A673 (cell line): ENCODE measurements at regions of chr21 and their contacts with region 1.

Region 1: DNA sequence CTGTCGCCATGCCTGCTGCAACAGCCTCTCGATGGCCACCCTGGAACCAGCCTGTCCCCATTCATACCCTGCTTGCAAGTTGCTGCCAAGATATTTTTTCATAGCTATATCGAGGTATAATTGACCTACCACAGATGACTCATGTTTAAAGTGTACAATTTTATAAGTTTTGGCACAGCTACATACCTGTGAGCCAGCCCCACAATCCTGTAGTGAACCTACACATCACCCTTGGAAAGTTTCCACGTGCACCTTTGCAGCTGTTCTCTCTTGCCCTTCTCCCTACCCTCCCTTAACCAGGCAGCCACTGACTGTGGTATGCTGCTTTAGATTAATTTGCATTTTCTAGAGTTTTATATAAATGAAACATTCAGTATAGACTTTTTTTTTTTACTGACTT is 23.0 kb upstream of the KCNJ6 start:
- DNase-seq: no peak
- H3K4me3 ChIP-seq: no peak overlapping the region
- H3K27ac ChIP-seq: no peak overlapping the region
- H3K4me1 ChIP-seq: no peaks in the 10 kb centered on the region
- H3K27me3 ChIP-seq: peaks cover 6% of the 10 kb centered on the region
- CTCF ChIP-seq: no peak

Region 2: DNA sequence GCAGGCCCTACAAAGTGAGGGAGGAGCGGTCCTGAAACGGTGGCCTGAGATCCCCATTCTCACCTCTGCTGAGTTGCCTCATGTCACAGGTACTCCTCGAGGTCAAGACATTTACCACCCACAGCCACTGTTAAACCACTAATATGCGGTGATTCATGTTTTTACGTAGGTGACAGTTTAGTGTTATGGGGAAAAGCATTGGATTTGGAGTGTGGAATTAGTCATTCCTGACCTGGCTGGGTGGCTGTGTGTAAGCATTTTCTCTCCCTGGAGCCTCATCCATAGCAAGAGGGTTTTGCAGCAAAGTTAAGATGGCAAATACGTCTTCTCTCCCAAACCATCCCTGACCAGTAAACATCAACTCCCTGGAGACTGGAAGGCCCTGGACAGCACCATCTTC is 34.8 kb after region 1 on chr21:
- CTCF ChIA-PET with region 1: no interaction called
- POLR2A ChIA-PET with region 1: no interaction called
- intact Hi-C with region 1: no loop called
- DNase-seq: no peak
- H3K4me3 ChIP-seq: no peak overlapping the region
- H3K27ac ChIP-seq: no peak overlapping the region
- H3K4me1 ChIP-seq: no peaks in the 10 kb centered on the region
- H3K27me3 ChIP-seq: peaks cover 54% of the 10 kb centered on the region
- CTCF ChIP-seq: no peak

Region 3: GRCh38 chr21:38171723-38172344 is 232.6 kb after region 1 on chr21:
- CTCF ChIA-PET with region 1: no interaction called
- POLR2A ChIA-PET with region 1: no interaction called
- intact Hi-C with region 1: no loop called
- DNase-seq: no peak
- H3K4me3 ChIP-seq: no peak overlapping the region
- H3K27ac ChIP-seq: no peak overlapping the region
- H3K4me1 ChIP-seq: no peaks in the 10 kb centered on the region
- H3K27me3 ChIP-seq: peaks cover 7% of the 10 kb centered on the region
- CTCF ChIP-seq: no peak

Region 4: GRCh38 chr21:39707316-39707715 is 1768.1 kb after region 1 on chr21:
- CTCF ChIA-PET with region 1: interaction called, 14 read pairs
- POLR2A ChIA-PET with region 1: no interaction called
- intact Hi-C with region 1: no loop called
- DNase-seq: no peak
- H3K4me3 ChIP-seq: no peak overlapping the region
- H3K27ac ChIP-seq: no peak overlapping the region
- H3K4me1 ChIP-seq: no peaks in the 10 kb centered on the region
- H3K27me3 ChIP-seq: no peaks in the 10 kb centered on the region
- CTCF ChIP-seq: no peak